PC-9 (cell line): ENCODE measurements at regions of chr2 and their contacts with region 1.

Region 1: GRCh38 chr2:7097348-7097895 is 180.2 kb downstream of the RNF144A start:
- DNase-seq: peak in 1 of 2 experiments; percentile 56
- H3K4me3 ChIP-seq: no peak overlapping the region
- H3K27ac ChIP-seq: no peak overlapping the region
- H3K4me1 ChIP-seq: no peaks in the 10 kb centered on the region
- H3K27me3 ChIP-seq: peaks cover 34% of the 10 kb centered on the region; the same call in 1 of the 2 replicates
- CTCF ChIP-seq: peak; percentile 96

Region 2: DNA sequence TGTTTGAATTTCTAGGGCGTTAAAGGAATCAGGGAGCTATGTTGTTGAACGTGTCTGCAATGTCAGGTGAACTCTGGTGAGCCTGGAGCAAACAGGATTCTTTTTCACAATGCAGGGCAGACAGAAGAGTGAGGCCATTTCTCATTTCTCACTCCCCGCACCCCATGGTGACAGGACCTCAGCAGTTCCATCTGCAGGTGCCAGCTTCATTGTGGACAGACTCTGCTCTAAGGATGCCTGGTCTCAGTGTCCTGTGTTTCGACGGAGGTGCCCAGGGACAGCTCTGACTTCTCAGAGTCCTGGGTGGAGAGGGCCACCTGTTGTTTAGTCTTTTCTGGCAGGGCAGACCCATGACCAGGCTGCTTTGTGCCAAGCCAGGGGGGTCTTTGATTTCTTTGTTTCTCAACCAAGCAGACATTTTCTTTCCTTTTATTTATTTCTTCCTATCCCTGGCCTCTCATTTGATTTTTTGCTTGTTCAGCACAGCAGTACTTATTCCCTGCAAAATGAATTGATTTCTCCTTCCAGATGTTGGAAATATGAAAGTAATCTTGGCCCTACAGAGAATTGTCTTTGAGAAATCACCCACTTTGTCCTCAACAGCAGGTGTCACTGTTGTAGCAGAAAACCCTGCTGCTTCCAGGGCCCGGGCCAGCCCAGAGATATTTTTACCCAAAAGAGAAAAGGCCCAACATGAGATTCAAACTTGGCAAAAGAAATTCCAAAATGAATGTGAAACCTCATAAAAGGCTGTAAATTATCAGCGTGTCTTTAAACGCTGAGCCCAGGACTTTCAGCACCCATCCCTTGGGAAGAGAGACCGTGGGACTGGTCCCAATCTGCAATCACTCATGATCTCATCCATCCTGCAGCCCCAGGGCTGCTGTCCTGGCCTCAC is 21.4 kb after region 1 on chr2:
- CTCF ChIA-PET with region 1: no interaction called
- POLR2A ChIA-PET with region 1: no interaction called
- intact Hi-C with region 1: no loop called
- DNase-seq: no peak
- H3K4me3 ChIP-seq: no peak overlapping the region
- H3K27ac ChIP-seq: no peak overlapping the region
- H3K4me1 ChIP-seq: no peaks in the 10 kb centered on the region
- H3K27me3 ChIP-seq: peaks cover 40% of the 10 kb centered on the region
- CTCF ChIP-seq: peak; percentile 61

Region 3: GRCh38 chr2:7672027-7672684 is 574.7 kb after region 1 on chr2:
- CTCF ChIA-PET with region 1: no interaction called
- POLR2A ChIA-PET with region 1: no interaction called
- intact Hi-C with region 1: loop called (anchors 10 kb)
- DNase-seq: peak in 1 of 2 experiments; percentile 24
- H3K4me3 ChIP-seq: no peak overlapping the region
- H3K27ac ChIP-seq: no peak overlapping the region
- H3K4me1 ChIP-seq: no peaks in the 10 kb centered on the region
- H3K27me3 ChIP-seq: 0 out of 2 replicates have a peak, but pooled peaks cover 3% of the 10 kb centered on the region
- CTCF ChIP-seq: peak; percentile 84

Region 4: GRCh38 chr2:8681786-8682692 is 1584.6 kb after region 1 on chr2 and contains the start of gene ID2:
- CTCF ChIA-PET with region 1: no interaction called
- POLR2A ChIA-PET with region 1: no interaction called
- intact Hi-C with region 1: loop called (anchors 2 kb)
- DNase-seq: peak; percentile 82 to 91
- H3K4me3 ChIP-seq: peak within 1 kb of the TSS; percentile 59
- H3K27ac ChIP-seq: no peak within 1 kb of the TSS
- H3K4me1 ChIP-seq: no peaks in the 10 kb centered on the region; the same call in 1 of the 2 replicates
- H3K27me3 ChIP-seq: peaks cover 62% of the 10 kb centered on the region
- CTCF ChIP-seq: no peak
- total RNA-seq, gene ID2: 0.61 and 0.95 TPM in 2 replicates

Region 5: DNA sequence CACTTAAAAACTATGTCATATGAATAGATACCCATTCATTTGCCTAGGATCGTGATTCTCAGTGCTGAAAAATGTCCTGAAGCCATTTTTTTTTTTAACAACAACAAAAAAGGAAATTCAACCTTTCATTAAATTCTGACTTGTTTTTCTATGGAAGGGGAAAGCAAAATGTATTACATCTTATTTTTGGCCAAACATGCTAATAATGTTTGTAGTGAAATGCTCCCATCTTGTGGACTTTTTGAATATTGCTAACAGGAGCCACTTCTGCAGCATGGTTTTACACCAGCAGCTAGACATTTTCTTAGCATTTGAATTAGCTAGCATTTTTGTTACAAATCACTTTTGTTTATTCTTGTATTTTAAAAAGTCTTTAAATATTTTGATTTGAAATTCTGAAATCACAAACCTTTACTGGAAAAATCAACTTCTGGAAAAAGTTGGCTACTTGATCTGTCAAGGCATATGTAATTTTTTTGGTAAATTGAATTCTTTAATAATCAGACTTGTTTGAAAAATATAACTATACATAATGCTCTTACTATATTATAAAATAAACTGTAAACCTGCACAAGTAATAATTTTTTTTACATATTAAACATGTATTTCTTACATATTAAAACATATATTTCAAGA is 1664.2 kb after region 1 on chr2:
- CTCF ChIA-PET with region 1: no interaction called
- POLR2A ChIA-PET with region 1: no interaction called
- intact Hi-C with region 1: loop called (anchors 5 kb)
- DNase-seq: no peak
- H3K4me3 ChIP-seq: no peak overlapping the region
- H3K27ac ChIP-seq: no peak overlapping the region
- H3K4me1 ChIP-seq: no peaks in the 10 kb centered on the region
- H3K27me3 ChIP-seq: no peaks in the 10 kb centered on the region
- CTCF ChIP-seq: peak; percentile 76